ENCODE measurements at regions of chr5 and their contacts with region 1.

Region 1: DNA sequence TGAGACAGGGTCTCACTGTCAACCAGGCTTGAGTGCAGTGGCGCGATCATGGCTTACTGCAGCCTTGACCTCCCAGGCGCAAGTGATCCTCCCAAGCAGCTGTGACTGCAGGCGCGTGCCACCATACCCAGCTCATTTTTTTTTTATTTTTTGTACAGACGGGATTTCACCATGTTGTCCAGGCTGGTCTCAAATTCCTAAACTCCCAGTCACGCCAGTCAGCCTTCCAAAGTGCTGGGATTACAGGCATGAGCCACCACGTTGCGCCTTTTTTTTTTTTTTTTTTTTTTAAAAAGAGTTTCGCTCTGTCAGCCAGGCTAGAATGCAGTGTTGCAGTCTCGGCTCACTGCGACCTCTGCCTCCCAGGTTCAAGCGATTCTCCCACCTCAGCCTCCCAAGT is 27.1 kb upstream of the SRP19 start:
- DNase-seq: no peak
- H3K4me3 Mint-ChIP-seq: no peak overlapping the region
- H3K27ac Mint-ChIP-seq: no peak overlapping the region
- H3K4me1 Mint-ChIP-seq: peaks cover 4% of the 10 kb centered on the region
- H3K27me3 Mint-ChIP-seq: no peaks in the 10 kb centered on the region

Region 2: DNA sequence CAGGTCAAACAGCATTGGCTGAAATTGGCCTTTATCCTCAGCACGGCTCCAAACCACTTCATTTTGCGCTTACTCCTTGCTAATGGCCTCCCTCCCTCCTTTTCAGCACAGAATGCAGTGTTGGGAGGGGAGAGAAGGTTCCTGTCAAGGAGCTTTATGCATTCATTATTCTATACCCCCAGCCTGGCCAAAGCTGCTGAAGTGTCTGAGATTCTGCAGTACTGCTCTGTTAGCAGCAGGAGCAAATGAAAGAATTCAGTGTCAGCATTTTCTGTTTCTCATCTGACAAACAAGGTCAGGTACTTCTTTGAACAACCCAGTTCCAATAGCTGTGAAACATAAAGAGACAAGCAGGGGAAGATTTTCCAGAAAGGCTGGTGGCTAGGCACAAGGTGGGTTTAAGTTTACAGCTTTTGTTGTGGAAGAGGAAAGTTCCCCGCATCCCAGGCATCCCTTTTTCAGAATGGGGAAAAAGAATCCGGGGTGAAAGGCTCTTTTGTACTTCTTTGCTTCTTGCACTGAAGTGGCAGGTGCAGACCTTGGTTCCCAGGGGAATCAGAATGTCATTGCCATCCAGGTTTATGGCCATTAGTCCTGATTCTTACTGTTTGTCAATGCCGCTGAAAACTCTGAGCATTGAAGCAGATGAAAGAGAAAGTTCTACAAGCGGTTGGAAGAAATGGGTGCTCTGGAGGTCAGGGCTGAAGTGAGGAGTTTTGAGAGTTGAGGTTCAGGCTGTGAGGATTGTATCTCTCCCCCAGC is 205.6 kb before region 1 on chr5:
- CTCF ChIA-PET with region 1: no interaction called
- POLR2A ChIA-PET with region 1: no interaction called
- DNase-seq: no peak
- H3K4me3 Mint-ChIP-seq: no peak overlapping the region
- H3K27ac Mint-ChIP-seq: no peak overlapping the region
- H3K4me1 Mint-ChIP-seq: no peaks in the 10 kb centered on the region
- H3K27me3 Mint-ChIP-seq: peaks cover 57% of the 10 kb centered on the region

Region 3: DNA sequence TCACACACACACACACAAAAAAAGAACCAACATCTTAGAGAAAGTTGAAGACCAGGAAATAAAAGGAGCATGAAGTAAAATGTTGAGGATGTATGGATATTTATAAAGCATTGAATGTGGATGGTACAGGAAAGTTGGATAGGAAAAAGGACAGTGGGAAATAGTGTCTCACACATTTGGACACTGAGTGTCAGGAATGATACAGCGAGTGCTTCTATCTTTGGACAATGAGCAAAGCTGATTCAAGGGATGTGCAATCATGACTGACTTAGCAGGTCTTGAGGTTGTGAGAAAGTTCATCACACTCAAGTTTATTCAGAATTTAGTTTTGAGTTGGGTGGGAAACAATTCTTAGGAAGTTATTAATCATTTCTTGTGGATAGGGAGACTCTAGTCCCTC is 22.9 kb before region 1 on chr5:
- CTCF ChIA-PET with region 1: no interaction called
- POLR2A ChIA-PET with region 1: no interaction called
- DNase-seq: no peak
- H3K4me3 Mint-ChIP-seq: no peak overlapping the region
- H3K27ac Mint-ChIP-seq: no peak overlapping the region
- H3K4me1 Mint-ChIP-seq: no peaks in the 10 kb centered on the region
- H3K27me3 Mint-ChIP-seq: no peaks in the 10 kb centered on the region

Region 4: DNA sequence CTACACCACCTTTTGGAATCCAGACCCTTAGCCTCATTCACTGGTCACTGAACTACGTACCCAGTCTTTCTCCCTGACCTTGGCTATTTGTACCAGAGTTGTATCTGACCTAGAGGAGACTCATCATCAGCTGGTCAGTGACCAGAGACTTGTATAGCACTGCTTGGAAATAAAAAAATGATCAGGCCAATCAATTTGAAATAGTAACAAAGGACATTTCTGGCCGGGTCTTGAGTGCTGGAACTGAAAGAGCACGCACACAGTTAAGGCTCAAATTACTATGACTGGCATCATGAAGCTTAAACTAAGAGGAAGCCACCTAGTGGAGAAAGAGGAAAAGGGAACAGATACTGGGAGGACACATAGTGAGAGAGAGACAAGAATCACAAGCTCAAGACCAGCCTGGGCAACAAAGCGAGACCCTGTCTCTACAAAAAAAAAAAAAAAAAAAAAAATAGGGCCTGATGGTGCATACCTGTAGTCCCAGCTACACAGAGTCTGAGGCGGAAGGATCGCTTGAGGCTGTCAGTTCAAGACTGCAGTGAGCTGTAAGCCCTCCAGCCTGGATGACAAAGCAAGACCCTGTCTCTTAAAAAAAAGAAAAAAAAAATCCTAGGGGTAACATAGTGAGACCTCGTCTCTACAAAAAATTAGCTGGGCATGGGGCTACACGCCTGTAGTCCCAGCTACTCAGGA is 14.3 kb after region 1 on chr5:
- CTCF ChIA-PET with region 1: interaction called, 23 read pairs
- POLR2A ChIA-PET with region 1: no interaction called
- DNase-seq: no peak
- H3K4me3 Mint-ChIP-seq: no peak overlapping the region
- H3K27ac Mint-ChIP-seq: no peak overlapping the region
- H3K4me1 Mint-ChIP-seq: peaks cover 3% of the 10 kb centered on the region
- H3K27me3 Mint-ChIP-seq: peaks cover 11% of the 10 kb centered on the region

Region 5: GRCh38 chr5:112869948-112870347 is 36.0 kb after region 1 on chr5:
- CTCF ChIA-PET with region 1: no interaction called
- POLR2A ChIA-PET with region 1: no interaction called
- DNase-seq: no peak
- H3K4me3 Mint-ChIP-seq: no peak overlapping the region
- H3K27ac Mint-ChIP-seq: peak overlapping the region; percentile 68
- H3K4me1 Mint-ChIP-seq: peaks cover 64% of the 10 kb centered on the region
- H3K27me3 Mint-ChIP-seq: no peaks in the 10 kb centered on the region